Activated naive CD4-positive, alpha-beta T cell treated with anti-CD3 and anti-CD28 coated beads for 36 hours (primary cell): ENCODE measurements at regions of chr4 and their contacts with region 1.

Region 1: GRCh38 chr4:159206427-159206871 is 103.6 kb downstream of the RAPGEF2 start:
- DNase-seq: peak; percentile 84
- H3K4me3 Mint-ChIP-seq: peak overlapping the region; percentile 44
- H3K27ac Mint-ChIP-seq: peak overlapping the region; percentile 97
- H3K4me1 Mint-ChIP-seq: peaks cover 54% of the 10 kb centered on the region
- H3K27me3 Mint-ChIP-seq: no peaks in the 10 kb centered on the region

Region 2: DNA sequence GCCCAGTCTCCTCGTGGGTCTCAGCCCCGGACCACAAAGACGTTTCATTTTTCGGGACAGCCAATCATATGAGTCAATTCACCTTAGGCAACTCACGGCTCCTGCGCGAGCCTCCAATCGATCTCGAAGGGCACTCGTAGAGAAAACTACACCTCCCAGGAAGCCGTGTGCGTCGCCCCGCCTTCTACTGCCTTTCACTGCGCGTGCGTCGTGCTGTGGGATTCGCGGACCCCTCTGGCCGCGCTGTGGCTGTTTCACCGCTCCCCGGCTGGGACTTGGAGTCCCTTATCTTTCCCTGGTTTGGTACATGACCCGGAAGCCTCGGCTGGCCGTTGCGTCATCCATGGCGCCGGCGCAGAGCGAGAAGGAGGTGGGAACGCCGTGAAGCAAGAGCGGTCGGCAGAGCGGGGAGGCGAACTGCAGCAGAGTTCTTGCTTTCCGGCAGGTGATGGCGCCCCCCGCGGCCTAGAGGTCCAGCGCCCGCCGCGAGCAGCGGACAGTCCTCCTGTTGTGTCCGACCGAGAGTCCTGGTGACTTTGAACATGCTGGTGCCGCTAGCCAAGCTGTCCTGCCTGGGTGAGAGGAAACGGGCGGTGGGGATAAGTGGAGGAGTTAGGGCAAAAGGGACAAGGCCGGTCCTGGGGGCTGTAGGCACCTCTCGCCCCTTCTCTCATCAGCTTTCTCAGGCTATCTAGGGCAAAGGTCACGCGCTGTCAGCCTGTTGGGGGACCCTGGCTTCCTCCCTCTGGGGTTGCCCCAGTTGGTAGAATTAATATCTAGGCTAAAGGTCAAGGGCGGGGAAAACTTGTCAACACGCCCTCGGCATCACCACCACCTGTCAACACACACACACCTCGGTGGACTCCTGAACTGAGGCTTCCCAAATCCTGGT is 534.3 kb before region 1 on chr4 and contains the start of gene ETFDH:
- CTCF ChIA-PET with region 1: no interaction called
- intact Hi-C with region 1: loop called (anchors 1 kb)
- DNase-seq: peak; percentile 97
- H3K4me3 Mint-ChIP-seq: peak within 1 kb of the TSS; percentile 96
- H3K27ac Mint-ChIP-seq: peak within 1 kb of the TSS; percentile 94
- H3K4me1 Mint-ChIP-seq: peaks cover 19% of the 10 kb centered on the region
- H3K27me3 Mint-ChIP-seq: no peaks in the 10 kb centered on the region
- total RNA-seq, gene ETFDH: 35.4 to 36.8 TPM

Region 3: GRCh38 chr4:158768555-158769174 is 437.8 kb before region 1 on chr4 and contains the start of gene FNIP2:
- CTCF ChIA-PET with region 1: interaction called, 4 read pairs
- intact Hi-C with region 1: loop called (anchors 1 kb)
- DNase-seq: peak; percentile 73
- H3K4me3 Mint-ChIP-seq: peak within 1 kb of the TSS; percentile 96
- H3K27ac Mint-ChIP-seq: peak within 1 kb of the TSS; percentile 90
- H3K4me1 Mint-ChIP-seq: peaks cover 39% of the 10 kb centered on the region
- H3K27me3 Mint-ChIP-seq: no peaks in the 10 kb centered on the region
- total RNA-seq, gene FNIP2: 10.1 to 11.3 TPM

Region 4: GRCh38 chr4:159102622-159103383 is 103.6 kb before region 1 on chr4 and contains the start of gene RAPGEF2:
- CTCF ChIA-PET with region 1: interaction called, 6 read pairs
- intact Hi-C with region 1: loop called (anchors 1 kb)
- DNase-seq: peak; percentile 91
- H3K4me3 Mint-ChIP-seq: peak within 1 kb of the TSS; percentile 80
- H3K27ac Mint-ChIP-seq: peak within 1 kb of the TSS; percentile 88
- H3K4me1 Mint-ChIP-seq: peaks cover 47% of the 10 kb centered on the region
- H3K27me3 Mint-ChIP-seq: no peaks in the 10 kb centered on the region
- total RNA-seq, gene RAPGEF2: 21.2 to 26.1 TPM

Region 5: GRCh38 chr4:159150821-159151390 is 55.5 kb before region 1 on chr4:
- CTCF ChIA-PET with region 1: no interaction called
- intact Hi-C with region 1: no loop called
- DNase-seq: no peak
- H3K4me3 Mint-ChIP-seq: no peak overlapping the region
- H3K27ac Mint-ChIP-seq: no peak overlapping the region
- H3K4me1 Mint-ChIP-seq: peaks cover 2% of the 10 kb centered on the region
- H3K27me3 Mint-ChIP-seq: no peaks in the 10 kb centered on the region

Region 6: DNA sequence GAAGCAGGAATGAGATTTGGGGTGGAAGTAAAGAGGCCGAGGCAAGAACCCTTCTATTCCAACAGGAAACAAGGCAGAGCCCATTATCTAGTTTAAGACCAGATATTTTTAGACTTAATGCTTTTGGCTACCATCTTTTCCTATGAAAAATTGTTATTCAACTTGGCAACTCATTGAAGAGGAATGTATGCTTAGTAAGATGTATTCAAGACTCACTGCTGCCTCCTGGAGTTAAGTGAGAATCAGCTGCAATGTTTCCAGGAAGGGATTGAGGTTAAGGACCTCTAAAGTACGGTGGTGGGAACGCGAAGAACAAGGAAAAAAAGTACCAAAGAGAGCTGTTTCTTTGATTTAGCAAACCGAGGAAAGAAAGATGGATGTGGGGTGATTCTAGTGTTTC is 14.5 kb before region 1 on chr4:
- CTCF ChIA-PET with region 1: interaction called, 12 read pairs
- intact Hi-C with region 1: no loop called
- DNase-seq: no peak
- H3K4me3 Mint-ChIP-seq: no peak overlapping the region
- H3K27ac Mint-ChIP-seq: no peak overlapping the region
- H3K4me1 Mint-ChIP-seq: no peaks in the 10 kb centered on the region
- H3K27me3 Mint-ChIP-seq: no peaks in the 10 kb centered on the region

Region 7: DNA sequence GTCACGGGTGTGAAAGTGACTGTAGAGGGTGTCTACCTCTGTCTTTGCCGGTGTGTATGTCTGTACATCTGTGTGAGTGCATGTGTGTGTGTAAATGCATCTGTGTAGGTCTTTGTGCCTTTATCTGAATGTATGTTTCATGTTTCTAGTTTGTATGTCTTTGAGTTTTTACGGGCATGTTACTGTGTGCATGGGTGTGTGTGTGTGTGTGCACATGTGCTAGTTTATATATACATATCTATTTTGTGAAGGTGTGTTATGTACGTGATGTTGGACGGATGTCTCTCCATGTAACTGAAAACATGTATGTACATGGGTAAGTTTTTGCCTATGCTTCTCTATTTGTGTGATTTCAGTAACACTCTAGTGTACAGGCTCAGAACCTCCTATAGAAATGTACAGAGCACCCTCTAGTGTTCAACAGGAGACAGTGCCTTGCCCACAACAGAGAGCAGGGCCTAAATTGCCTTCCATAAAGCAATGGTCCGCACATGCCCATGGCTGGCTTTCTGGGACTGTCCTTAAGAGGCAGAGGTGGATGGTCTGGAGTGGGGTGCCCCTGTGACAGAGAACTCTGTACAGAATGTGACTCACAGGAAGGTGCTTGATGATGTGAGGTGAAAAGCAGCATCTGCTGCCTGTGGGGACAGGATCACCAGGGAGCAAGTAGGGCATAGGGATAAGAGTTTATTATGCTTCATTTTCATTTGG is 240.0 kb after region 1 on chr4:
- CTCF ChIA-PET with region 1: no interaction called
- intact Hi-C with region 1: loop called (anchors 1 kb)
- DNase-seq: peak; percentile 42
- H3K4me3 Mint-ChIP-seq: no peak overlapping the region
- H3K27ac Mint-ChIP-seq: no peak overlapping the region
- H3K4me1 Mint-ChIP-seq: no peaks in the 10 kb centered on the region
- H3K27me3 Mint-ChIP-seq: peaks cover 17% of the 10 kb centered on the region